Cardiac septum (tissue), 1 donor: ENCODE measurements at regions of chr14 and their contacts with region 1.

Region 1: DNA sequence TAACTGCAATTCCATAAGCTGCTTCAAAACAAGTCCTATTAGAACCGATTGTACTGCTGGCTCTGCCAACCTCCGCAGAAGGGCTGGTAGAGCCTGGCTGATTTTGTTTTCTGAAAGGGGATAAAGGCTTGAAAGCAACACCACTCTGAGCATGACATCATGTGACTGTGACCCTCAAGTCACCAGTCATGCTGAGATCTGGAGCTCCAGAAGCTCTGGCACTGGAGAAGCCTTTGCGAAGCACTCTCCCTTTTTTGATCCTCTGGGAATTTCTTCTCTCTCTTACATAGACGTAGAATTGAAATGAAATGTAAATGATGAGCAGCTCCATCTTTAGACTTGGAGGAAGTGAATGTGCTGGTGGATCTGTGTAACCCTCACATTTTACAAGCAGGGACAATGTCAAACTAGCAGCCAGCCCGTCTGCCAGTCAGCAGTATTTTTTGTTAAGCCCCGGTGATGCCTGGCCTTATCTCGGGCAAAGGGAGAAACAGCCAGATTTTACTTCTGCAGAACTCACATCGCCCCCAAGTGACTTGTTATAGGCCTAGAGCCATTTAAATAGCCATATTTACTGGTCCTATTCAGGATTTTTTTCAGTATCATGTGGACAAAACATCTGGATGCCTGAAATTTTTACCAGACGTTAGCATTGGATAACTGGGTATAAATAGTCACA is 112.1 kb upstream of the NPAS3 start:
- DNase-seq: no peak

Region 2: GRCh38 chr14:32710731-32711680 is 115.5 kb before region 1 on chr14:
- intact Hi-C with region 1: loop called (anchors 5 kb)
- DNase-seq: no peak